ENCODE measurements at regions of chr1 and their contacts with region 1.

Region 1: DNA sequence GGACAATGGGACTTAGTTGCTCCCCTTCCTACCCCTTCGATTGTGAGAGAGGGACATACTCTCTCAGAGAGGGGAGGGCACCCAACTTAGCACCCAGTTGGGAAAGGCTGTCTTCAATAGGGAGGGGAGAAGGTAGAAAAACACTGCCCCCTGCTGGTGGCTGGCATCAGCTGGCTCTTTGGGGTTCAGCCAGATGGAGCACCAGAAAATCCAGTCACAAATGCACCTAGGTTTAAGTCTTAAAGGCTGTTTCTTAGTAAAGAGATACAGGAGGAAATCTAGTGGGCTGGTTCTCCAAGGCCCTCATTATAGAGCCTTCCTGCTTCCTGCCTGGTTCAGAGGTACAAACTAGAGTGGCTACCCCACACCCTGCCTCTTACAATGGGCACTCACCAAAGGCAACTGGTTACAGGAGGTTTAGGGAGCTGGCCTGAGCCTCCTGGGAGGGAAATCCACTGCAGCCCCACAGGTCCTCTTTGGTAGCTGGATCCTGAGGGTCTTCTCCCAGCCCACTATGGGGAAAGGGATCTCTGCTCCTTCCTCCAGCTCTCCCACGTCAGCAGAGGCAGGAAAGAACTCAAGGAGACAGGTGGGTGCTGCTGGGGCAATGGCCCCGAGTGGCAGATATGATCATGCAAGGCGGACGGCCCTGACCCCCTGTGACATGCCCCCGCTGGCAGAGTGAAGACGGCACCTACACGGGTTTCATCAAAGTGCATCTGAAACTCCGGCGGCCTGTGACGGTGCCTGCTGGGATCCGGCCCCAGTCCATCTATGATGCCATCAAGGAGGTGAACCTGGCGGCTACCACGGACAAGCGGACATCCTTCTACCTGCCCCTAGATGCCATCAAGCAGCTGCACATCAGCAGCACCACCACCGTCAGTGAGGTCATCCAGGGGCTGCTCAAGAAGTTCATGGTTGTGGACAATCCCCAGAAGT is 28.3 kb downstream of the EIF2D start:
- DNase-seq: peak; percentile 64 to 81
- H3K4me3 ChIP-seq: no peak overlapping the region
- H3K27ac ChIP-seq: no peak overlapping the region
- H3K4me1 ChIP-seq: peaks cover 0 to 6% of the 10 kb centered on the region in 2 donors
- H3K27me3 ChIP-seq: no peaks in the 10 kb centered on the region
- CTCF ChIP-seq: peak; percentile 72 to 85 (median 83)
- POLR2A ChIP-seq: no peak

Region 2: DNA sequence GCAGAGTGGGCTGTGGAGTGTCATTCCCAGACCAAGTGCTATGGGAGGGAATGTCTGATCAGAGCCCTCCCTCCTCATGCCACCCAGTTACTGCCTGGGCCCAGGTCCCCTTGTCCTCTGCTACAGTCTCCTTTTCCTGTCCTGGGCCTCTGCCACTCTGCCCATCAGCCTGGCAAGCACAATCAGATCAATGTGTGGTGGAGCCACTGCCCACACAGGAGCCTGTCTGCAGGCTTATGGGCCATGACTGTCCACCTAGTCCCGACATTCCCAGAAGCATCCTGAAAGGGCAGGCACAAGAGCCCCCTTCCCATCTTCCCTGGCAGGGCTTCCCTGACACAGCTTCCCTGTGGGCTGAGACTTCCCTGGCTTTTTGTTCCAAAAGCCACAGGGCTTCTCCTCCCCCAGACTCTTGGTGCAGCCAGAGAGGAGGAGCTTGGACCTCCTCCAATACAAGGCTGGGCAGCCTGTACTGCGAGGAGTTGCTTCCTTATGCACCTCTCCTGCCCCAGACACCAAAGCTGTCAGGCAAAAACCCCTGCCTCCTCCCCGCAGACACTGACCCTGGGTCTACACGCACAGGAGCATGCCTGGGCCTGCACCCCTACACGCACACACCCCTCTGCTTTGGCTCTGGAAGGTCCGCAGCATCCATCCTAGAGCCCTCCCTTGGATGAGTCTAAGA is 1570.2 kb before region 1 on chr1:
- intact Hi-C with region 1: no loop called
- DNase-seq: peak in 1 of 2 donors; percentile 45
- H3K4me3 ChIP-seq: no peak overlapping the region
- H3K27ac ChIP-seq: no peak overlapping the region
- H3K4me1 ChIP-seq: peaks cover 6 to 9% of the 10 kb centered on the region in 2 donors
- H3K27me3 ChIP-seq: no peaks in the 10 kb centered on the region
- CTCF ChIP-seq: no peak
- POLR2A ChIP-seq: no peak

Region 3: GRCh38 chr1:206489980-206490770 is 93.8 kb before region 1 on chr1:
- intact Hi-C with region 1: loop called (anchors 10 kb)
- DNase-seq: peak; percentile 60 to 78
- H3K4me3 ChIP-seq: no peak overlapping the region
- H3K27ac ChIP-seq: no peak overlapping the region
- H3K4me1 ChIP-seq: no peaks in the 10 kb centered on the region
- H3K27me3 ChIP-seq: no peaks in the 10 kb centered on the region
- CTCF ChIP-seq: peak; percentile 70 to 92 (median 90)
- POLR2A ChIP-seq: no peak

Region 4: DNA sequence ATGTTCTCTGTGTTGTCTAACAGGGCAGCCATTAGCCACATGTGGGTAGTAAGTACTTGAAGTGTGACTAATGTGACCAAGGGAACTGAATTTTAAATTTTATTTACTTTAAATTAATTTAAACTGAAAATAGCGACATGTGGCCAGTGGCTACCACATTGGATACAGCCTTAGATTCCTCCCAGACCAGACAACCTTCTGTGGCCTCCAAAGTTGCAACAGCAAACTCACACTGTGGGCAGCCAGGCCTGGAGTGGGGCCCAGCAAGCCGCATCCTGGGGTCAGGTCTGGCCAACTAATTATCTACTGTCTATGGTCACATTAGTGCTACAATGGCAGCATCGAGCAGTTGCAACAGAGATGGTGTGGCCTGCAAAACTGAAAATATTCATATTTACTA is 16.5 kb after region 1 on chr1:
- intact Hi-C with region 1: no loop called
- DNase-seq: no peak
- H3K4me3 ChIP-seq: no peak overlapping the region
- H3K27ac ChIP-seq: no peak overlapping the region
- H3K4me1 ChIP-seq: no peaks in the 10 kb centered on the region
- H3K27me3 ChIP-seq: no peaks in the 10 kb centered on the region
- CTCF ChIP-seq: no peak
- POLR2A ChIP-seq: no peak

Region 5: GRCh38 chr1:208054485-208054884 is 1470.5 kb after region 1 on chr1:
- intact Hi-C with region 1: no loop called
- DNase-seq: no peak
- H3K4me3 ChIP-seq: no peak overlapping the region
- H3K27ac ChIP-seq: no peak overlapping the region
- H3K4me1 ChIP-seq: no peaks in the 10 kb centered on the region
- H3K27me3 ChIP-seq: no peaks in the 10 kb centered on the region
- CTCF ChIP-seq: no peak
- POLR2A ChIP-seq: no peak